Activated CD8-positive, alpha-beta T cell treated with anti-CD3 and anti-CD28 coated beads, Interleukin-2, amount 10 ng/mL, durations not matched to agents 7 days and 5 days (primary cell): ENCODE measurements at regions of chr4 and their contacts with region 1.

Region 1: DNA sequence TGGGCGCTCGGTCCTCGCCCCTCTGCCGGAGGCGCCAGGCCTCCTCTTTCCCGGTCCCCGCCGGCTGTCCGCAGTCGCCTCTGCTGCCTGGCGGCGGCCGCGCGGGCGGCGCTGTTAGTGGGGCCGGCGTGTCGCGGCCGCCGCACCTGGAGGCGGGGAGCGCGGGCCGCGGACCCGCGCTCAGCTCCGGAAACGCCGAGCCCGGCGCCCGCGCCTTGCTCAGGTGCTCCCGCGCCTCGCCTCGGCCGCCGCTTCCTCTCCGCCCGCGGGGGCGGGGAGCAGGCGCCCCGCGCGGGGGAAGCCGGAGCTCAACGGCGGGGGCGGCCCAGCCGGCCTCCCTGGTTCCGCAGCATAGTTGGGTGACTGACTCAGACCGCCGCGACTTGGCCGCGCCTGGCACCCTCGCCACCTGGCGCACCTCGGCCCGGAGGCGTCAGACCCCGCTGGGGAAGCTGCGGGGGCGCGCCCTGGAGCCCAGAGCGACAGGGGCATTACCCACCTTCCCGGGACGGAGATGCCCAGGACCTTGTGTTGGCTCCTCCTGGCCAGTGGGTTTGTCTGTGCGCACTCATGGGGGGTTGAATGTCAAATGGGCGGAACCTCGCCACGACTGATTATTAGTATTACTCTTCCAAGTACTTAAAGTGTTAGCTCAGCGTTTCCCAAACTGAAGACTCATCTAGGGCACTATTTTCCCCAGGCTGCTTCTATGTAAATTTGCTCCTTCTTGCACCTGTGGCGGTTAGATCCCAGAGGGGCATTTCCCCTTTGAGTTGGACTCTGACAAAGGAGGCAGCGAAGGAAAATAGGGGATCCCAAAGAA is at the start of gene ARAP2:
- DNase-seq: peak; percentile 74
- ATAC-seq: peak; percentile 80
- H3K4me3 Mint-ChIP-seq: peak within 1 kb of the TSS; percentile 84
- H3K27ac Mint-ChIP-seq: peak within 1 kb of the TSS; percentile 85
- H3K4me1 Mint-ChIP-seq: peaks cover 31% of the 10 kb centered on the region
- H3K27me3 Mint-ChIP-seq: no peaks in the 10 kb centered on the region
- total RNA-seq, gene ARAP2: 34.7 to 35.5 TPM

Region 2: GRCh38 chr4:35975617-35976355 is 268.7 kb before region 1 on chr4:
- CTCF ChIA-PET with region 1: no interaction called
- POLR2A ChIA-PET with region 1: no interaction called
- DNase-seq: no peak
- ATAC-seq: no peak
- H3K4me3 Mint-ChIP-seq: no peak overlapping the region
- H3K27ac Mint-ChIP-seq: no peak overlapping the region
- H3K4me1 Mint-ChIP-seq: peaks cover 6% of the 10 kb centered on the region
- H3K27me3 Mint-ChIP-seq: peaks cover 2% of the 10 kb centered on the region

Region 3: DNA sequence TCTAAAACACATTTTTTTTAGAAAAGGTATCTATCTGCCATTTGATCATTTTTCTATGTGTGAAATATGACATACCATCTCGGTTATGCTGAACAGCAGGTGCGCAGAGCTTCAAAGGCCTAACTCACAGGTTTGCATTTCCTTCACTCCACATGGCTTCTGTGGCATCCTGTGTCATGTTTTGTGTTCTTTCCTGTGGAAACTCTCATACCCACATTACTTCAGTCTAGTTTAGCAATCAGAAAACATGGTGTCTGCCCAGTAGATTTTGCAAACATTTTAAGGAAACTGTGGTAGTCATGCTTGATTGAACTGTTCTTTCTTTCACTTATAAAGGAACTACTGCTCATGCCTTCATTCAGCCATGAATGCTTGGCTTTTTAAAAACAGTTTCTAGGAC is 11.1 kb after region 1 on chr4:
- CTCF ChIA-PET with region 1: interaction called, 50 read pairs
- POLR2A ChIA-PET with region 1: interaction called, 70 read pairs
- DNase-seq: peak; percentile 85
- ATAC-seq: peak; percentile 95
- H3K4me3 Mint-ChIP-seq: peak overlapping the region; percentile 72
- H3K27ac Mint-ChIP-seq: peak overlapping the region; percentile 94
- H3K4me1 Mint-ChIP-seq: peaks cover 45% of the 10 kb centered on the region
- H3K27me3 Mint-ChIP-seq: no peaks in the 10 kb centered on the region

Region 4: DNA sequence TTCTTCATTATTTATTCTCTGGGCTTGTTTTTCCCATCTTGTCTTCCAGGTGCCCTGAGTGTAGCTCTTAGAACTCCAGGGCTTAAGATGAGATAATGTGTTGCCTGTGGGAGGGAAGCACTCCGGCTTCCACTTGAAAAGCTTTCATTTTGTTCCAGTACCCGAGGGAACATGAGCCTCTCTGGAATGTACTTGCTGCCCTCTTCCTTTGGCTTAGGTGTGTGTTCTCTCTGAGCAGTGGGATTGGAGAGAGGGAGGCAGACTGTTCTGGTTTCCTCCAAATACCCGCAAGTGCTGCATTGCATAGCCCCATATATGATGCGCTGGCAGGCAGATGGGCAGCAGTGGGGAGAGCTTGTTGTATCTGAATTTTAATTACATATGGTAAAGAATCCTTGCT is 36.1 kb after region 1 on chr4:
- CTCF ChIA-PET with region 1: interaction called, 19 read pairs
- POLR2A ChIA-PET with region 1: interaction called, 33 read pairs
- DNase-seq: no peak
- ATAC-seq: peak; percentile 26
- H3K4me3 Mint-ChIP-seq: no peak overlapping the region
- H3K27ac Mint-ChIP-seq: no peak overlapping the region
- H3K4me1 Mint-ChIP-seq: peaks cover 54% of the 10 kb centered on the region
- H3K27me3 Mint-ChIP-seq: no peaks in the 10 kb centered on the region

Region 5: GRCh38 chr4:36325499-36325898 is 81.0 kb after region 1 on chr4:
- CTCF ChIA-PET with region 1: interaction called, 11 read pairs
- POLR2A ChIA-PET with region 1: interaction called, 21 read pairs
- DNase-seq: no peak
- ATAC-seq: peak; percentile 32
- H3K4me3 Mint-ChIP-seq: no peak overlapping the region
- H3K27ac Mint-ChIP-seq: peak overlapping the region; percentile 5
- H3K4me1 Mint-ChIP-seq: peaks cover 60% of the 10 kb centered on the region
- H3K27me3 Mint-ChIP-seq: no peaks in the 10 kb centered on the region